Kidney (tissue), 22 donors: ENCODE measurements at regions of chr17 and their contacts with region 1.

Region 1: GRCh38 chr17:58703137-58703972 is 11.0 kb downstream of the RAD51C start:
- DNase-seq: no peak
- H3K4me3 ChIP-seq: no peak overlapping the region
- H3K27ac ChIP-seq: no peak overlapping the region
- H3K4me1 ChIP-seq: no peaks in the 10 kb centered on the region
- H3K27me3 ChIP-seq: no peaks in the 10 kb centered on the region
- CTCF ChIP-seq: no peak

Region 2: DNA sequence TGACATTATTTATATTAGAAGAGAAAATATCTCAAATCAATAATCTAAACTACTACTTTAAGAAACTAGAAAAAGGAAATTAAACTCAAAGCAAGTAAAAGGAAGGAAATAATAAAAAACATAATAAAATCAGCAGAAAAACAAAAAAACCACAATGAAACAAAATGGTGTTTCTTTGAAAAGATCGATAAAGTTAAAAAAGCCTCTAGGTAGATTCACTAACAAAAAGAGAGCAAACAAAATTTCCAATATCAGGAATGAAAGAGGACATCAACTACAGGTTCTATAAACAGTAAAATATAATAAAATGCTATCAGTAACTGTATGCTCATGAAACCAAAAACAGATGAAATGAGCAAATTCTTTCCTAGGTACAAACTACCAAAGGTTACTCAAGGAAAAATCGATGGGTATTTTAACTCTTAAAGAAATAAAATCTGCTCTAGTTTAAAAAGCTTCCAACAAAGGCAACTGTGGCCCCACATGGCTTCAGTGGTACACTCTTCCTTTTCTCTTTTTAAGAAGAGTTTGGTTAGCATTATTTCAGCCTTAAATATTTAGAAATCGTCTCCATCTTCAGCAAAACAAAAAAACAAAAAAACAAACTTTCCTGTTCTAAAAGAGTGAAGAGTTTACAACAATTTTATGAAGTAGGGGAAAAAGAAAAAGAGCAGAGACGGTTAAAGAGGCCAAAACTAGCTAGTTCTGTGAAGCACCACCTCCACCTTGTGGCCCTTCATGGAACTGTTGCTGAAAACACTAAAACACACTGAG is 301.2 kb after region 1 on chr17:
- intact Hi-C with region 1: loop called (anchors 10 kb)
- DNase-seq: peak in 4 of 5 donors; percentile 60 to 80 (median 66)
- H3K4me3 ChIP-seq: no peak overlapping the region
- H3K27ac ChIP-seq: no peak overlapping the region
- H3K4me1 ChIP-seq: no peaks in the 10 kb centered on the region
- H3K27me3 ChIP-seq: no peaks in the 10 kb centered on the region
- CTCF ChIP-seq: peak; percentile 97